ENCODE measurements at regions of chr3 and their contacts with region 1.

Region 1: DNA sequence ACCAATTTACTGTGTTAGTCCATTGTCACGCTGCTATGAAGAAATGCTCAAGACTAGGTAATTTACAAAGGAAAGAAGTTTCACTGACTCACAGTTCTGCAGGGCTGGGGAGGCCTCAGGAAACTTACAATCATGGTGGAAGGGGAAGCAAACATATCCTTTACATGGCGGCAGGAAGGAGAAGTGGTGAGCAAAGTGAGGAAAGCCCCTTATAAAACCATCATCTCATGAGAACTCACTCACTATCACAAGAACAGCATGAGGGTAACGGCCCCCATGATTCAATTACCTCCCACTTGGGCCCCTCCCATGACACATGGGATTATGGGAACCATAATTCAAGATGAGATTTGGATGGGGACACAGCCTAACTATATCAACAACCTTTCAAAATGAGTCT is 20.2 kb downstream of the USF3 start:
- DNase-seq: no peak
- H3K4me3 ChIP-seq: no peak overlapping the region
- H3K27ac ChIP-seq: no peak overlapping the region
- H3K4me1 ChIP-seq: no peaks in the 10 kb centered on the region
- H3K27me3 ChIP-seq: no peaks in the 10 kb centered on the region
- CTCF ChIP-seq: no peak
- POLR2A ChIP-seq: no peak

Region 2: GRCh38 chr3:113501597-113501996 is 174.7 kb before region 1 on chr3:
- intact Hi-C with region 1: loop called (anchors 5 kb)
- DNase-seq: no peak
- H3K4me3 ChIP-seq: no peak overlapping the region
- H3K27ac ChIP-seq: no peak overlapping the region
- H3K4me1 ChIP-seq: no peaks in the 10 kb centered on the region
- H3K27me3 ChIP-seq: no peaks in the 10 kb centered on the region
- CTCF ChIP-seq: no peak
- POLR2A ChIP-seq: no peak

Region 3: DNA sequence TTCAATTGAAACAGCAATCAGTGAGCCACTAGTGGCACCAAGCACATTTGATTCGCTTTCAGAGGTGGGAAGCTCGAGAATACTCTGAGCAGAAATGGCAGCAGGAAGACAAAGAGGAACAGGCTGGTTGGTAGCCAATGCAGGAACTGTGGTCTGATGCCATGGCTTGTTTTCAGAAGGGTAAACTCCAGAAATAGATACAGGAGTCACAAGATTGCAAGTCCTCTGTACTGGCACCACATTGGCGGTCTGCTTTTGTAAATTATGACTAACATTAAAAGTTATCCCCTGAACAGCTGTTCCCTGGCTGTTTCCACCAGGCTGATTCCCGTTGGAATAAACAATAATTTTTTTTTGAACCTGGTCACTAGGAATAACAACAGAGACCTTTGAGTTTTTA is 15.4 kb before region 1 on chr3:
- intact Hi-C with region 1: no loop called
- DNase-seq: no peak
- H3K4me3 ChIP-seq: no peak overlapping the region
- H3K27ac ChIP-seq: no peak overlapping the region
- H3K4me1 ChIP-seq: no peaks in the 10 kb centered on the region
- H3K27me3 ChIP-seq: no peaks in the 10 kb centered on the region
- CTCF ChIP-seq: no peak
- POLR2A ChIP-seq: no peak

Measured in breast epithelium (tissue), 4 donors.